ENCODE measurements at regions of chr16 and their contacts with region 1.

Region 1: DNA sequence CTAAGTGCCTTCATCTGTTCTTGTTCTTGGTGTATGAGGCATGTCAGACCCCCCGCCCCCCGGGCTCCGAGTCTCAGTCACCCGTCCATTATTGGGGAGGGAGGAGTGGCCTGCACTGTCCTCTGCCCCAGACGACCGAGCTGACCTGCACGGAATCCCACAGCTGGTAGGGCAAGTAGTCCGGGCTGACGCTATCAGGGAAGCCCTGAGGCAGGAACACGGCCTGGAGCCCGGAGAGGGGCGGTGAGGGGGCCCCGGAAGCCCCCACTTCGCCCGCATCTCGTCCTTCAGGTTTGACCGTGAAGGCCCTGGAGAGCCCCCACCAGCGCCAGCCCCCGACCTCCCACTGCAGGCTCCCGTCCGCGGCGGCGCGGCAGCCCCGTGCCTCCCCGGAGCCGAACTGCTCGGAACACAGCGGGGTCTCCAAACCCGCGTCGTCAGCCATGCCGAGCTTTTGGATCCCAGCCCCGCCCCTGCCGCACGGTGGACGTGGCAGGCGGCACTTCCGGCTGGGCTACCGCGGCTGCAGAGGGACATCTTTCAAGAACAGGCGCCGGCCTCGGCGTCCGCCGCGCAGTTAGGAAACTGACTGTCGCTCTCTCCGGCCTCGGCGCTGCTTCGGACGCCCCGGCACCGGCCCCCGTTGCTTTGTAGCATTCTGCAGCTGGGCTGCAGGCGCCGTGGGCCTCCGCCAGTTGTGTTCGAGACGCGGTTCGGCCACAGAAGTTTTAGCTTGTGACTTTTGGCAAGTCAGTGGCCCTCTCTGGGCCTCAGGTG is at the start of gene RUSF1:
- DNase-seq: peak; percentile 72 to 91
- ATAC-seq: peak; percentile 97 to 98
- H3K4me3 ChIP-seq: peak within 1 kb of the TSS; percentile 79
- H3K27ac ChIP-seq: peak within 1 kb of the TSS; percentile 91 to 95
- H3K4me1 ChIP-seq: peaks cover 14% of the 10 kb centered on the region
- CTCF ChIP-seq: no peak
- EP300 ChIP-seq: no peak
- POLR2A ChIP-seq: peak; percentile 71
- RAD21 ChIP-seq: no peak
- polyA plus RNA-seq, gene RUSF1: 27.8 and 42.4 TPM in 2 replicates

Region 2: GRCh38 chr16:31496670-31497069 is 11.4 kb before region 1 on chr16:
- CTCF ChIA-PET with region 1: interaction called, 6 read pairs
- POLR2A ChIA-PET with region 1: interaction called, 10 read pairs
- DNase-seq: no peak
- ATAC-seq: no peak
- H3K4me3 ChIP-seq: no peak overlapping the region
- H3K27ac ChIP-seq: no peak overlapping the region
- H3K4me1 ChIP-seq: no peaks in the 10 kb centered on the region
- CTCF ChIP-seq: no peak
- EP300 ChIP-seq: no peak
- POLR2A ChIP-seq: no peak
- RAD21 ChIP-seq: no peak

Region 3: DNA sequence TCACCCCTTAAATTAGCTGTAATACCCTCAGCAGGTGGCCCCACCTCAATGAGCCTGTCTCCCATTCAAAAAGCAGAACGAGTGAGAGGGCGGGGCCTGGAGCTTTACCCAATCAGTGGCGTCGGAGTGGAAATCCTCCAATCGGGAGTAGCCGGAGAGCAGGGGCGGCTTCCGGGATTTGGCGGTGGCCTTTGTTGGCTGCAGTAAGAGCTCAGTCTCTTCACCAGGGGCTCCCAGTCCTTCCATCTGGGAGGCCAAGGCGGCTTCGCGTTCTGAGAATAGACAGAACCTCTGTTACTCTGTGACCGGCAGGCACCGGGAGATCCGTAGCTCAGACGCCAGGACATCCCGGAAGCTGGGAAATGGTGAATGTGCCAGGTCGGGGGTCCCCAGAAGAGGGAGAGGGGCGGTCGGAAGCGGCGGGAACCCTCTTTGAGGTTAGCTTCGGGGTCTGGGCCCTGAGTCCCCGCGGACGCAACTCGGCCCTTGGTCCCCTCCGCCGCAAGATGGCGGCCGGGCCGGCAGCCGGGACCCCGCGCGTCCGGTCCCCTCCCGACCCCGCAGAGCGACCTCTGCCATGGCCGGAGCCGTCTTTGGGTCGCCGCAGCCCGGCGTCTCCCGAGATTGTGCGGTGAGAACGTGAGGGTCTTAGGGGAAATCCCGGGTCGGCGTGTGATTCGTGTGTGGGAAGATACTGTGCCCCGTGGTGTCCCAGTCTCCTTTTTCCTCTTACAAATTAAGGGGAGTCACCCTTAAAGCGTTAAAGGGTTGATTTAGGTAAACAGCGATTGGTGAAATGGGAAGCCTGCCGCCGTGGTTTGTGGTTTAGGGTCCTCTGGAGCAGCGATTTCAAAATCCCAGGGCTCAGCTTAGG is 205.2 kb after region 1 on chr16:
- CTCF ChIA-PET with region 1: no interaction called
- POLR2A ChIA-PET with region 1: interaction called, 10 read pairs
- DNase-seq: peak; percentile 93
- ATAC-seq: peak; percentile 92 to 98
- H3K4me3 ChIP-seq: peak overlapping the region; percentile 82
- H3K27ac ChIP-seq: peak overlapping the region; percentile 90 to 96
- H3K4me1 ChIP-seq: 0 out of 3 replicates have a peak, but pooled peaks cover 6% of the 10 kb centered on the region
- CTCF ChIP-seq: no peak
- EP300 ChIP-seq: no peak
- POLR2A ChIP-seq: peak; percentile 95
- RAD21 ChIP-seq: no peak